ENCODE measurements at regions of chr6 and their contacts with region 1.

Region 1: GRCh38 chr6:53492860-53493634 is 51.9 kb downstream of the GCLC start:
- DNase-seq: peak in 7 of 9 donors; percentile 22 to 65 (median 49)
- ATAC-seq: peak; percentile 66
- H3K4me3 ChIP-seq: no peak overlapping the region
- H3K4me3 Mint-ChIP-seq: no peak overlapping the region
- H3K27ac ChIP-seq: no peak overlapping the region
- H3K27ac Mint-ChIP-seq: peak overlapping the region in 1 of 9 donors; percentile 18
- H3K4me1 ChIP-seq: no peaks in the 10 kb centered on the region
- H3K4me1 Mint-ChIP-seq: peaks cover 0 to 7% (median 4%) of the 10 kb centered on the region in 7 donors
- H3K27me3 ChIP-seq: no peaks in the 10 kb centered on the region
- H3K27me3 Mint-ChIP-seq: peaks cover 0 to 34% (median 17%) of the 10 kb centered on the region in 5 donors

Region 2: DNA sequence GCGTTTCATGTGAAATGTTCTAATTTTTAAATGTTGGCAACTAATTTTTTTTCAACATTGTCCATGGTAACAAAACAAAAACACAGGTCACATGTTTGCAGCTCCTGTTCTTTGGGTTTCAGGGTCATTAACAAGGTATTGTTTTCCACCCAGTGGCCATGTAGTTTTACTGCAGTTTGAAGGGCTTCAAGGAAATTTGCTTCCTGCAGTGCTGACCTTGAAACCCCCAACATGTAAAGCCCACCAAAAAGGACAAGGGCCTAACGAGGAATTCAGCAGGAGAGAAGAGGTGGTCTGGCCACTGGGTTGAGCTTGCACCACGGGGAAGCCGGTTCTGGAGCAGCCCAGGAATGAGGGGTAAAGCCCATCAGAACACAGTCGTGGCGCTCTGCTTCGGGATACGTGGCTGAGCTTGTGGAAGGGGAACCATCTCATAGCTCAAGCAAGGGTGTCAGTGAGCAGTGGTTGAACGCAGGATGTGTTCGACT is 186.4 kb after region 1 on chr6:
- CTCF ChIA-PET with region 1: interaction called, 9 read pairs
- POLR2A ChIA-PET with region 1: no interaction called
- intact Hi-C with region 1: loop called in 1 of 2 experiments (anchors 1 kb)
- DNase-seq: peak in 5 of 9 donors; percentile 2 to 40 (median 7)
- ATAC-seq: peak; percentile 58
- H3K4me3 ChIP-seq: no peak overlapping the region
- H3K4me3 Mint-ChIP-seq: no peak overlapping the region
- H3K27ac ChIP-seq: no peak overlapping the region
- H3K27ac Mint-ChIP-seq: no peak overlapping the region
- H3K4me1 ChIP-seq: no peaks in the 10 kb centered on the region
- H3K4me1 Mint-ChIP-seq: no peaks in the 10 kb centered on the region
- H3K27me3 ChIP-seq: no peaks in the 10 kb centered on the region
- H3K27me3 Mint-ChIP-seq: peaks cover 0 to 24% (median 0%) of the 10 kb centered on the region in 5 donors

Region 3: DNA sequence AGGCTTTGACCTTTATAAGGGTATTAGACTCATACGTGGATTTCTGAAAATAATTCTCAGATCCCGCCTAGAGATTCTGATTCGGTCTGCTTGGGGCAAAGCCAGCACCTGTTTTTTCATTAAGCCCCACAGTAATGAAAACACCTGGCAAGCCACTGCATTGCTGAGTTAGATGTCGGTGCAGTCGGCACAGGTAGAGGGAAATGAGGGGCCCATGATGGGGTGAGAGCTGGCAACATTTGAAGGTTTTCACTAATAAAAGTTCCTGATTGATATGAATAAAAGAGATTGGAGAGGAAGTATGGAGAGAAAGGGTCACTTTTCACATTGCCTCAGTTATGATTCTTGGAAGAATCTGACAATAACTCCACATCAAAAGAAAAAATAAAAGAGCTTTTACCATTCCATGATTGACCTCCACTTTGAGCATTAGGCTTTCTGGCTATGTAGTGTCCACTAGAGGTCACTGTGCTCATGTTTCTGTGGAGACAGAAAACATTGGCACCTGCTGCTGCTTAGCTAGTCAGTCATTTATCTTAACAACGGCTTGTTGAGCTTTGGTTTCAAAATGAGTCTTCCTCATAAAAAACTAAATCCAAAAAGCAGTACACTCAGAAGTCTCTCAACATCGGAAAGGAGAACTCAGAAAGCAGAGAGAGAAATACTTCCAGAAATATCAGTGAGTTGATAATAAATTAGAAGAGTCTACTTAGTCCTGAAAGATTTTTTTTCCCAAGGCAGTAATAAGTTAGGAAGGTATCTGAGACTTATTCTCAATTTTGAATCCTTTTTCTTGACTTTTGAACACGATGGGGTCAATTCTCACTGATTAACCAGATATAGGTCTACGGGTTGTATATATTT is 225.8 kb after region 1 on chr6:
- CTCF ChIA-PET with region 1: interaction called, 148 read pairs
- POLR2A ChIA-PET with region 1: no interaction called
- intact Hi-C with region 1: no loop called
- DNase-seq: peak in 5 of 9 donors; percentile 18 to 36 (median 28)
- ATAC-seq: peak; percentile 84
- H3K4me3 ChIP-seq: no peak overlapping the region
- H3K4me3 Mint-ChIP-seq: no peak overlapping the region
- H3K27ac ChIP-seq: no peak overlapping the region
- H3K27ac Mint-ChIP-seq: peak overlapping the region in 1 of 9 donors; percentile 46
- H3K4me1 ChIP-seq: no peaks in the 10 kb centered on the region
- H3K4me1 Mint-ChIP-seq: peaks cover 0 to 7% (median 4%) of the 10 kb centered on the region in 7 donors
- H3K27me3 ChIP-seq: no peaks in the 10 kb centered on the region
- H3K27me3 Mint-ChIP-seq: peaks cover 13 to 34% (median 29%) of the 10 kb centered on the region in 5 donors

Region 4: GRCh38 chr6:53725791-53726431 is 232.9 kb after region 1 on chr6:
- CTCF ChIA-PET with region 1: interaction called, 148 read pairs
- POLR2A ChIA-PET with region 1: interaction called, 3 read pairs
- intact Hi-C with region 1: loop called (anchors 1 kb)
- DNase-seq: peak; percentile 46 to 79 (median 63)
- ATAC-seq: peak; percentile 95
- H3K4me3 ChIP-seq: no peak overlapping the region
- H3K4me3 Mint-ChIP-seq: peak overlapping the region in 1 of 10 donors; percentile 59
- H3K27ac ChIP-seq: no peak overlapping the region
- H3K27ac Mint-ChIP-seq: peak overlapping the region in 1 of 9 donors; percentile 63
- H3K4me1 ChIP-seq: no peaks in the 10 kb centered on the region
- H3K4me1 Mint-ChIP-seq: peaks cover 0 to 14% (median 4%) of the 10 kb centered on the region in 7 donors
- H3K27me3 ChIP-seq: no peaks in the 10 kb centered on the region
- H3K27me3 Mint-ChIP-seq: peaks cover 15 to 24% (median 22%) of the 10 kb centered on the region in 5 donors

Measured in naive thymus-derived CD4-positive, alpha-beta T cell (primary cell).